Dendritic cell treated with granulocyte-macrophage colony-stimulating factor and Interleukin-4, amounts not matched to agents 40 ng/mL and 50 ng/mL, for 4 days (primary cell): ENCODE measurements at regions of chr4 and their contacts with region 1.

Region 1: DNA sequence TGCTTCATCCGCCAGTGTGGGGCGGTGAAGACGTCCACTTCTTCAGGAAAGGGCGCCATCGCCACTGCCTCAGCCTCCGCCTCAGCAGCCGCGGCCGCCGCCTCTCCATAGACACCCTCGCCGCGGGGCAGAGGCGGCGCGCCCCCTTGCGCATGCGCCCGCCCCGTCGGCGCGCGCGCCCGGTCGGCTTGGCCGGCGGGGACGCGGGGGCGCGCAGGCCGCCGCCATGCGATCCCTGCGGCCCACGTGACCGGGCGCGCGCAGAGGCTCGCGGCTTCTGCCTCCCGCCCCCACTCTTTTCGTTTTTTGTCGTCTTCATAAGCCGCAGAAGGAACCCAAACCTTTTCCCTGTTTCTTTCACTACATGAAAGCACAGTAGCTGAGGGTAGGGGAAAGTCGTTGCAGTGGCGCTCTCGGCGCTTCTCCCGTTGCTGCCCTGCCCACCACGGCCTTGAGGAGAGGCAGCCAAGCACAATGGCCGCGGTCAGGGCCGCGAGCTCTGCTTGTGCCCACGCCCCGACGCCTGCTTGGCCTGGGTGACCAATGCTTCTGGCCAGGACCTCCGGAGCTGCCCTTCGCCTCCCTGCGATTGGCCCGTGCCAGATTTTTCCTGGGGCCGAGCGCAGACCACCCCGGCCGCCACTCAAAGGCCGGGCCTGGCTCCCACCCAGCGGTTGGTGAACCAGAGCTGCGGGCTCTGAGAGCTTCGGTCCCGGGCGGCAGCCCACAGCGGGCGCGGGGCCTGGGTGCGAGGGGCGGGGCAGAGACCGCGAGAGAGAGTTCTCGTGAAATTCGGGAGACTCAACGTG is at the start of gene FBXL5:
- H3K4me3 Mint-ChIP-seq: peak within 1 kb of the TSS; percentile 99
- H3K27ac Mint-ChIP-seq: peak within 1 kb of the TSS; percentile 99
- H3K4me1 Mint-ChIP-seq: peaks cover 62% of the 10 kb centered on the region
- H3K27me3 Mint-ChIP-seq: no peaks in the 10 kb centered on the region

Region 2: DNA sequence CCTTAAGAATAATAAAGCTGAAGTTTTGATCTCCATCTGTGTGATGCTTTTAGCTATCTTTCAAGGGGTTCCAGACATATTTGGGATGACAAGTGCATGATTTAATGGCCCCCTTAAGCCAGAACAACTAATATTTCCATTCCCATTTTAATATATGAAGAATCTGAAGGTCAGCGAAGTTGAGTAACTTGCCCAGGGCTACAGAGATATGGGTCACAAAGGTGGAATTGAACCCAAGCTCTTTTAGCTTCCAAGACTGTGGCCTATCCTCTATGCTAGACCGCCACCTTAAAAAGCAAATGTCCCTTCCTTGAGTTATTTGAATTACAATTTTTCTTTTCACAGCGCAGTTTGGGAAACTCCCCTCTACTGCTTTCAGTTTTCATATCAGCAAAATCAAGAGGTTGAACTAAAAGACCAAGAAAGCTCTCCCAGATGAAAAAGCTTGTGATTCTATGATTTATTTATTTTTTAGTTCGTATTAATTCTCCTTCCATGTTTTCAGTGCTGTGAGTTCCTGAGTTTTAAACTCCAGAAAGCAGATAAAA is 402.2 kb before region 1 on chr4:
- intact Hi-C with region 1: no loop called
- H3K4me3 Mint-ChIP-seq: no peak overlapping the region
- H3K27ac Mint-ChIP-seq: no peak overlapping the region
- H3K4me1 Mint-ChIP-seq: peaks cover 19% of the 10 kb centered on the region
- H3K27me3 Mint-ChIP-seq: no peaks in the 10 kb centered on the region

Region 3: DNA sequence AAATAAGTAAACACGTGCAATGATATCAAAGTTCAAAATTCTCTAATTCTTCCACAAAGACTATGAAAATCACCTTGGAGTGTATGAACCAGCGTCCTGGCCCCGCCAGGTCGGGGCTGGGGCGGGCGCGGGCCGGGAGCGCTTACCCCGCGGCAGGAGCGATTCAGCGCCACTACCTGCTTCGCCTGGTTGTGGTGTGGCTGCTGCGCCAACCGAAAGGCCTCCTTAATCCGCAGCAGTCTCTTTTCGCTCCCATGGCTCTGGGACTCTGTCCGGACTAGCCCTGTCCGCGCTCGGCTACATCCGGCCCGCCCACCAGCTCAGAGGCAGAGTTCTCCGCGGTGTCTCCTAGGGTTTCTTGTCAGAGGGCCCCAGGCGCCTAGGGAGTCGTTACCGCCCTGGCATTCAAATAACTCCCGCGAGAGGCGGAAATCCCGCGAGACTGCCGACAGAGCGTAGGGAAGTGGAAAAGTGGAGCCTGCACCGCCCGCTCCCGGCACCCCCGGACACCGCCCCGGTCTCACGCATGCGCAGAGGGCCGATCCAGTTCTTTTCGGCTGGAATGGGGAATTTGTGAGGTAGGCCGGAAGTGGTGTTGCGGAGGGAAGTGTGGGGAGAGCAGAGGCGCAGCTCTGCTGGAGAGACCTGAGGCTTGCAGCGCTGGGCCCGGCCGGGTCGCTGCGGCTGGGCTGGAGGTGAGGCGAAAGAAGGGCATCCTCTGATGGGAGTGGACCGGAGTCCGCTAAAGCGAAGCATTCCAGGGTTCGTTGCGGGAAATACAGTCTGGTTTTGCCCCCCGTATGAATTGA is 26.0 kb after region 1 on chr4 and contains the start of gene FAM200B:
- intact Hi-C with region 1: loop called (anchors 1 kb)
- H3K4me3 Mint-ChIP-seq: peak within 1 kb of the TSS; percentile 93
- H3K27ac Mint-ChIP-seq: peak within 1 kb of the TSS; percentile 98
- H3K4me1 Mint-ChIP-seq: peaks cover 62% of the 10 kb centered on the region
- H3K27me3 Mint-ChIP-seq: no peaks in the 10 kb centered on the region

Region 4: GRCh38 chr4:15719506-15719905 is 64.1 kb after region 1 on chr4:
- intact Hi-C with region 1: no loop called
- H3K4me3 Mint-ChIP-seq: no peak overlapping the region
- H3K27ac Mint-ChIP-seq: peak overlapping the region; percentile 78
- H3K4me1 Mint-ChIP-seq: peaks cover 19% of the 10 kb centered on the region
- H3K27me3 Mint-ChIP-seq: no peaks in the 10 kb centered on the region

Region 5: DNA sequence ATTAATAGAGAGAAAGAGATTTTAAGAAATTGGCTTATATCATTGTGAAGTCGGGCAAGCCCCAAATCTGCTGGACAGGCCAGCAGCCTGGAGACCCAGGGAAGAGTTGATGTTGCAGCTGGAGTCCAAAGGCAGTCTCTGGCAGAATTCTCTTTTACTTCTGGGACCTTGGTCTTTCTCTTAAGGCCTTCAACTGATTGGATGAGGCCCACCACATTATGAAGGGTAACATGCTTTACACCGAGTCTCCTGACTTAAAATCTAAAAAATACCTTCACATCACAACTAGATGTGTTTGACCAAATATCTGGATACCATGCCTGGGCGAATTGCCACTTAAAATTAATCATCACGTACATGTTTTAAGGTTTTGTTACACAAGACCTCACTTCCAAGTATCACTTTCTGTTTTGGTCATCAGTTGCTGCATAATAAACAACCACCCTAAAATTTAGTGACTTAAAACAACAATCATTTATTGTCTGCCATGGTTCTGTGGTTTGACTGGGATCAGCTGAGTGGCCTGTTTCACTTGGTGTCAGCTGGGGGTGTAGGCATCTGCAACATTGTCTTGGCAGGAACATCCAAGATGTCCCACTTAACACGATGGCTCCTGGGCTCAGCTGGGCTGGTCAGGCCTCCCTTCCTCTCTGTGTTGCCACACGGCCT is 126.1 kb after region 1 on chr4:
- intact Hi-C with region 1: loop called (anchors 10 kb)
- H3K4me3 Mint-ChIP-seq: peak overlapping the region; percentile 59
- H3K27ac Mint-ChIP-seq: peak overlapping the region; percentile 98
- H3K4me1 Mint-ChIP-seq: peaks cover 65% of the 10 kb centered on the region
- H3K27me3 Mint-ChIP-seq: no peaks in the 10 kb centered on the region